ENCODE measurements at regions of chr18 and their contacts with region 1.

Region 1: GRCh38 chr18:3771121-3771971 is 321.4 kb downstream of the TGIF1 start:
- DNase-seq: peak; percentile 78
- H3K4me3 ChIP-seq: peak overlapping the region; percentile 47
- CTCF ChIP-seq: peak; percentile 99

Region 2: GRCh38 chr18:3758531-3758930 is 12.8 kb before region 1 on chr18:
- CTCF ChIA-PET with region 1: interaction called, 19 read pairs
- POLR2A ChIA-PET with region 1: no interaction called
- DNase-seq: no peak
- H3K4me3 ChIP-seq: no peak overlapping the region
- CTCF ChIP-seq: no peak

Region 3: GRCh38 chr18:3794537-3795348 is 23.4 kb after region 1 on chr18:
- CTCF ChIA-PET with region 1: interaction called, 45 read pairs
- POLR2A ChIA-PET with region 1: no interaction called
- DNase-seq: peak; percentile 96
- H3K4me3 ChIP-seq: no peak overlapping the region
- CTCF ChIP-seq: no peak

Region 4: DNA sequence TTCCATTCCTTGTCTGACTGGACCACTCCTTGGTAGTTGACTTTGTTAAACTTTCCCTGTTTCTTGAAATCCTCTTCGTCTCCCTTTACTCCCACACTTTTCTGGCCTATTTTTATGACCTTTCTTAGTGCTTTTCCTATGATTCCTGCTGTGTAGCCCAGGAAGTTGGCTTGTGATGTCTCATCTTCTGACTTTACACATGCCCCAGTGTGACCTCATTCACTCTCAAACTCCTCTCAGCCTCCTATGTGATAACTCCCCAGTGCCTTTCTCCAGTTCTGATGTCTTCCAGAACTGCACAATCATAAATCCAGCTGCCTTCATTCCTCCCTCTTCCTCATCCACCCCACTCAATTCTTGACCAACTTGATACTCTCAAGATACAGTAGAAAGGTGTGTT is 86.2 kb after region 1 on chr18:
- CTCF ChIA-PET with region 1: interaction called, 18 read pairs
- POLR2A ChIA-PET with region 1: no interaction called
- DNase-seq: no peak
- H3K4me3 ChIP-seq: no peak overlapping the region
- CTCF ChIP-seq: no peak

Region 5: GRCh38 chr18:3995476-3996102 is 224.2 kb after region 1 on chr18:
- CTCF ChIA-PET with region 1: interaction called, 100 read pairs
- POLR2A ChIA-PET with region 1: no interaction called
- DNase-seq: no peak
- H3K4me3 ChIP-seq: no peak overlapping the region
- CTCF ChIP-seq: peak; percentile 72

Measured in AG04449 (cell line).